Activated CD4-positive, alpha-beta T cell treated with anti-CD3 and anti-CD28 coated beads, Interleukin-2, amount 10 ng/mL, durations not matched to agents 7 days and 5 days (primary cell): ENCODE measurements at regions of chr14 and their contacts with region 1.

Region 1: DNA sequence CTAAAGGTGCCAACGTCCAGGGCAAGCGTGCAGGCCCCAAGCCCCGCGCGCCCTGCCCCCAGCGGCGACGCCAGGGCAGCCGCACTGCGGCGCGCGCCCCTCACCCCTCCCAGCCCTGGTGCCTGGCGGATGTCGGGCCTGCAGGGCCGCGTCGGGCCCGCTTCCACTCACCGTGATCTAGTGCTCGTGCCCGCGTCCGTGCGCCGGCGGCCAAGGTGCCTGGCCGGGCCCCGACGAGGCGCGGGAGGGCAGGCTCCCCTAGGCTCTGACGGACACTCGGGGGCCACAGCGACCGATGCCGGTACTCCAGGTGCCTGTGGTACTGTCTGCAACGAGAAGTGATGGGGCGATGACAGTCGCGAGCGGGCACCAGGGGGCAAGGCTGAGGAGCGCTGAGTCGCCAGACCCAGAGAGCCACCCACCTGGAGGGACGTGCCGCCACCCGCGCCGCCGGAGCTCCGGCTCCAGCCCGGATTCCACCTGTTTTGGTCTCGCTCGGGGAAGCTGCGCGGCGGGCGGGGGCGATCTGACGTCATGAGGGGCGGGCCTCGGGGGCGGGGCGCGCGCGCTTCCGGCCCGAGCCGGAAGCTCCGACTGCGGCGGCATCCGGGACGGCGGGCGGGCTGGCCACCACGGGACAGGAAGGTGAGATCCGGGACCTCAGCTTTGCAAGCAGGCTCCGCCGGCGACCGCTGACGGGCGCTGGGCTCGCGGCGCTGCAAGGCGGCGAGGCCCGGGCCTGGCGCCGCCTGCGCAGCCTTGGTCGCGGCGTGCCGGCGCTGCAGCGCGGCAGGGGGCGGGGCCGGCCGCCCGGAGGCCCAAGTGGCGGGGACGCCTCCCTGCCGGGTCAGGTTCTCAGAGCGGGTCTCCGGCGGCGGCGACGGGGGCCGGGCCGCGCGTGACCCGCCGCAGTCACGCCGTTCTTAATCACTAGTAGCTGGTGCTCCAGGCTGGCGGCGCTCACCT is at the starts of genes LYSET and MOAP1:
- DNase-seq: peak; percentile 91
- H3K4me3 Mint-ChIP-seq: peak within 1 kb of the TSS; percentile 85
- H3K27ac Mint-ChIP-seq: peak within 1 kb of the TSS; percentile 94
- H3K4me1 Mint-ChIP-seq: peaks cover 34% of the 10 kb centered on the region
- H3K27me3 Mint-ChIP-seq: no peaks in the 10 kb centered on the region
- total RNA-seq, gene LYSET: 10.8 to 11.0 TPM
- total RNA-seq, gene MOAP1: 23.3 to 25.3 TPM

Region 2: GRCh38 chr14:93206793-93207467 is 22.3 kb after region 1 on chr14 and contains the starts of genes GON7 and UBR7:
- CTCF ChIA-PET with region 1: interaction called, 13 read pairs
- POLR2A ChIA-PET with region 1: interaction called, 3 read pairs
- DNase-seq: peak; percentile 94
- H3K4me3 Mint-ChIP-seq: peak within 1 kb of the TSS; percentile 79
- H3K27ac Mint-ChIP-seq: peak within 1 kb of the TSS; percentile 94
- H3K4me1 Mint-ChIP-seq: peaks cover 47% of the 10 kb centered on the region
- H3K27me3 Mint-ChIP-seq: no peaks in the 10 kb centered on the region
- total RNA-seq, gene GON7: 17.9 to 20.4 TPM
- total RNA-seq, gene UBR7: 43.5 to 45.8 TPM